ENCODE measurements at regions of chr2 and their contacts with region 1.

Region 1: GRCh38 chr2:60674524-60675165 is 81.4 kb upstream of the PAPOLG start:
- DNase-seq: peak; percentile 87
- H3K4me3 Mint-ChIP-seq: no peak overlapping the region
- H3K27ac Mint-ChIP-seq: no peak overlapping the region
- H3K4me1 Mint-ChIP-seq: no peaks in the 10 kb centered on the region
- H3K27me3 Mint-ChIP-seq: peaks cover 20% of the 10 kb centered on the region

Region 2: DNA sequence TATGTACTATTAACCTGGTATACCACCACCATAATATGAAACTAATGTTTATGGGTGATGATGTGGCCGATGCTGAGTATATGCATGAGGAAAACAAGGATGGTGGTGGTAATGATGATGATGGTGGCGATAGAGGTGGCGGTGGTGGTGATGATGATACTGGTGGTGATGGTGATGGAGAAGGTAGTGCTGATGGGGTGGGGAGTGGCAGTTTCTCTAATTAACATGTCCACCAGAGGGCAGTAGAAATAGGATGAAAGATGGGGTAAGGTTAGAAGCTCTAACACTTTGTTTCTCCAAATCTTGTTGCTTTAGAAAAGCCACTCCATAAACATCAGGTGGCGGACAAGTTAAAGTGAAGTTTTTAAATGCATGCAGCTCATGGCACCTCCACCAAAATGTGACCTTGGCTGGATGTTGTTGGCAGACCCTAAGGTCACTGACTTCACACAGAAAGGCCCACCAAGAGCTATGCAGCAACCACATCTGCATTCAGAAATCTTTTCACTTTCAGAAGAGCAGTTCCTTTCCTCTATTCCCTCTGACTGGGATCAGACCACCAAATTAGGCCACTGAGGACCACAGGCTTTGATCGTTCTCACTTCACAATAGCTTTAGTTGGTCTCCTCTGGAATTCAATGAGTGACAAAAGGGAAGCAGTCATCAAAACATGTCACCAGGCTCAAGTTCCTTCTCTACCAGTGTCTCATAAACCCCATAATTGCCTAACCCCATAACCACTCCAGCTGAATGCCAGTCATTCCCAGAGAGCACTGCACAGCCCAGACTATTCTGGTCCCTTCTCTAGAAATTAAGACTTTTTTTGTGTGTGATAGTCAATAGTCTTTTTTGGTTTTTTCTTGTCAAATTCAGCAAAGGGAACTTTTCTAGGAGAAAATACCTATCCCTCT is 113.7 kb before region 1 on chr2:
- CTCF ChIA-PET with region 1: interaction called, 13 read pairs
- DNase-seq: no peak
- H3K4me3 Mint-ChIP-seq: no peak overlapping the region
- H3K27ac Mint-ChIP-seq: no peak overlapping the region
- H3K4me1 Mint-ChIP-seq: peaks cover 12% of the 10 kb centered on the region
- H3K27me3 Mint-ChIP-seq: peaks cover 67% of the 10 kb centered on the region

Region 3: DNA sequence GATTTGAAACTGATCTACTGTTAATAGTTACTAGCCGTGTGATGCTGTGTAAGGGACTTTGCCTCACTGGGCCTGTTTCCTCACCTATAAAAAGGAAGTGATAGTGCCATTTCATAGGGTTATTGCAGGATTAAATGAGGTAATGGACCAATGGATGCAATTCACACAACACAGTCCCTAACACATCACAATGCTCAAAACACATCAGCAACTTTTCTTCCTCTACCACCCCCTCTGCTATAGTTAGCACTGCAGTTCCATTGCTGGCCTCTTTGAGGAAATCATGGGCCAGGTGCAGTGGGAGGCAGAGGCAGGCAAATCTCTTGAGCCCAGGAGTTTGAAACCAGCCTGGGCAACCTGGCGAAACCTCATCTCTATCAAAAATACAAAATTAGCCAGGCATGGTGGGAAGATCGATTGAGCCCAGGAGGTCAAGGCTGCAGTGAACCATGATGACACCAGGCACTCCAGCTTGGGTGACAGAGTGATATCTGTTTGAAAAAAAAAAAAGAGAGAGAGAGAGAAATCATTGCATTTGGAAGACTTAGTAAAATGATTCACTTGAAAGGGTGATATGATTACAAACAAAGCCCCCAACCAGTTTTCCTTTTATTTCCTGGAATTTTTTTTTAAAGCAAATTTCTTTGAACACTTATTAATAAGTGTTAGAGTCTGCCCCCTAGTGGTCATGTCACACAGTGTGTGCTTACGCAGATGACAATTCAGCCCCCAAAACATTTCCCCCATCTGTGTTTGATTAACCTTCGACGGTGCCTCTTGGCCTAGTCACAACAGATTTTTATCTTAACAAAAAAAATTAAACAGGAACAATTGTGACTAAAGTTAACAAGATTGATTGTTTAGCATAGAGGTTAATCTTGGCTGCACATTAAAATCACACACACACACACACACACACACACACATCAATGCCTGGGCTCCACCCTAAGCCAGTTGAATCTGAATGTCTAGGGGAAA is 32.5 kb before region 1 on chr2:
- CTCF ChIA-PET with region 1: interaction called, 18 read pairs
- DNase-seq: peak; percentile 29
- H3K4me3 Mint-ChIP-seq: no peak overlapping the region
- H3K27ac Mint-ChIP-seq: no peak overlapping the region
- H3K4me1 Mint-ChIP-seq: no peaks in the 10 kb centered on the region
- H3K27me3 Mint-ChIP-seq: peaks cover 5% of the 10 kb centered on the region

Measured in activated naive CD4-positive, alpha-beta T cell treated with anti-CD3 and anti-CD28 coated beads, Interleukin-2, amount 10 ng/mL, durations not matched to agents 7 days and 5 days (primary cell).